A549 (cell line): ENCODE measurements at regions of chr3 and their contacts with region 1.

Region 1: DNA sequence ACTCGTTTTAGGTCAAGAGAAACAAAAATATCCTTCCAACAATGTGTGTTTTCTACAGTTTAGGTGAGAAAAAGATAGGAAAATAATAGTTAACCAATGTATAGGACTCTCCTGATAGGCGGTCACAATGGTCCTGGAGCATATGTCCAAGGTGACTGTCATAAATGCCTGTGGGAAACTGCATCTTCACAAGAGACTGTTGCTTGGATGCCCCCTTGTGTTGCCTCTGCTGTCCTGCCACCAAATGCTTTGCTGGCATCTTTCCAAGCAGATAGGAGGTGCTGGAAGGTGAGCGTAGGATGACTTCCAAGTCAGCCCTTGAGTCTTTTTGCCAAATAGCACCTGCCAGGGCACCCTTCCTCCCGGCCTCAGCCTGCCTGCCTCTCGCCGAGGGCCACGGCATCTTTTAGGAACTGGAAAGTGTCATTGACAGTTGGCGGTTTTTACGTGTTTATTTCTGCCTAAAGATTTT is 24.1 kb upstream of the SACM1L start:
- DNase-seq: peak; percentile 38 to 76
- ATAC-seq: peak; percentile 65 to 68; a peak in 4 of 6 replicates
- H3K4me3 ChIP-seq: no peak overlapping the region
- H3K27ac ChIP-seq: peak overlapping the region in 1 of 2 experiments; percentile 38; a peak in 1 of 6 replicates
- H3K4me1 ChIP-seq: peaks cover 43% of the 10 kb centered on the region
- CTCF ChIP-seq: peak; percentile 56
- EP300 ChIP-seq: no peak
- POLR2A ChIP-seq: no peak
- RAD21 ChIP-seq: peak; percentile 54 to 57

Region 2: DNA sequence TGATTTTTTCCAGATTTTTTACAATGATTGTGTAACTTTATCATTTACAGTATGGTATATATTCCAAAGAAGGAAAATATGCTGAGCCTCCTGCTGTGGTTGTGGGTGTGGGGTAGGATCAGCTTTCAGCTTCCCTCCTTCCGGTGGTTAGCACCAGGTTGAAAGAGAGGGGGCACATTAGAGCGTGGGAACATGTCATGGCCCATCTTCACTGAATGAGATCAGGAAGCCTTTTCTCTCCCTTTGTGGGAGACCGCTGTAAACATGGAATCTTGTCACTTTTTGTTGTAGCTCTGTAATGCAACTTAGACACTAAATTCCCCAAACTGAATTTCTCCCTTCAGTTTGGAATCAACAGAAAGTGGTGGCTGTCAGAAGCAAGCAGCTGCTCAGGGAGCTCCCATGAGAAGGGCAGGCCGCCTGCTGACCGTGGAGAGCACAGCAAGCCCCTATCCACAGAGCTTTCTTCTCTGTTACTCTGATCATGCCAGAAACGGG is 157.3 kb before region 1 on chr3:
- CTCF ChIA-PET with region 1: interaction called, 35 read pairs
- POLR2A ChIA-PET with region 1: no interaction called
- DNase-seq: peak in 1 of 2 experiments; percentile 27
- ATAC-seq: peak; percentile 69 to 82; a peak in 5 of 6 replicates
- H3K4me3 ChIP-seq: no peak overlapping the region
- H3K27ac ChIP-seq: no peak overlapping the region
- H3K4me1 ChIP-seq: 0 out of 3 replicates have a peak, but pooled peaks cover 7% of the 10 kb centered on the region
- CTCF ChIP-seq: no peak
- EP300 ChIP-seq: no peak
- POLR2A ChIP-seq: no peak
- RAD21 ChIP-seq: no peak; a peak in 1 of 5 replicates

Region 3: DNA sequence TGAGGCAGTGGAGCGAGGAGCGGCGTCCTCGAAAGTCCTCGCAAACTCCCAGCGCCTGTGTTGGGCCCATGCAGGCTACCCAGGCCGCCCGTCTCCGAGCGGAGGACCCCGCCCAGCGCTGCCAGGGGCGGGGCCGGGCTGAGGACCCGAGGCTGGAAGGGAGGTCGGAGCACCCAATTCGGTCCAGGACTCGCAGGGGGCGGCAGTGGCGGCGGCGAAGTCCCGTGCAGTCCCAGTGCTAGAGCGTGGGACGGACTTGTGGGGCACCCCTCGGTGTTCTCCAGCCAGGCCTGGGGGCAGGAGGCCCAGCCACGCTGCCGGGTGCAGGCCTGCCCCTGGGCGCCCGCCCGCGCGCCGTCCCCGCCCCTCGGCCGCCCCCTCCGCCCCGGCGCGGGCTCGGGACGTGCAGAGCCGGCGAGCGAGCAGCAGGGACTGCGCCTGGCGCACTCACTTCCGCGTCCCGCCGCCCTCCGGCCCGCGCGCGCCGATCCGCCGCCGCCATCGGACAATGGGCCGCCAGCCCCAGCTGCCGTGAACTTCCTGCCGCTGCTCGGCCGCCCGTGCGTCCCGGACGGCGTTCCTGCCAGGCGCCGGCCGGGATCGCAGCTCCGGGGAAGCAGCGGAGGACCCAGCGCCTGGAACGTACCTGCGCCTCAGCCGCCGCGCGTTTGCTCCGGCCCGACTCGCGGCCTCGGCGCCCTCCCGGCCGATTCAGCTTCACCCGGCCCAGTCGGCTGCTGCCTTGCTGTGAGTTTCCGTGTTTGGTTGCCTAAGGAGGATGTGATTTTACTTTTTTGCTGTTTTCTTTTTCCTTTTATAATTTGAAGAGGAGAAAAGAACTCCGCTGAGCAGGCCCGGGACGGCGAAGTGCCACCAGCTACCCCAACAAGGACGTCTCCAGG is 71.2 kb before region 1 on chr3:
- CTCF ChIA-PET with region 1: interaction called, 42 read pairs
- POLR2A ChIA-PET with region 1: no interaction called
- DNase-seq: peak; percentile 56 to 80
- ATAC-seq: peak; percentile 84 to 86
- H3K4me3 ChIP-seq: peak overlapping the region; percentile 63
- H3K27ac ChIP-seq: peak overlapping the region; percentile 89 to 94
- H3K4me1 ChIP-seq: peaks cover 32% of the 10 kb centered on the region
- CTCF ChIP-seq: no peak
- EP300 ChIP-seq: no peak
- POLR2A ChIP-seq: peak; percentile 48
- RAD21 ChIP-seq: no peak